ENCODE measurements at regions of chr6 and their contacts with region 1.

Region 1: DNA sequence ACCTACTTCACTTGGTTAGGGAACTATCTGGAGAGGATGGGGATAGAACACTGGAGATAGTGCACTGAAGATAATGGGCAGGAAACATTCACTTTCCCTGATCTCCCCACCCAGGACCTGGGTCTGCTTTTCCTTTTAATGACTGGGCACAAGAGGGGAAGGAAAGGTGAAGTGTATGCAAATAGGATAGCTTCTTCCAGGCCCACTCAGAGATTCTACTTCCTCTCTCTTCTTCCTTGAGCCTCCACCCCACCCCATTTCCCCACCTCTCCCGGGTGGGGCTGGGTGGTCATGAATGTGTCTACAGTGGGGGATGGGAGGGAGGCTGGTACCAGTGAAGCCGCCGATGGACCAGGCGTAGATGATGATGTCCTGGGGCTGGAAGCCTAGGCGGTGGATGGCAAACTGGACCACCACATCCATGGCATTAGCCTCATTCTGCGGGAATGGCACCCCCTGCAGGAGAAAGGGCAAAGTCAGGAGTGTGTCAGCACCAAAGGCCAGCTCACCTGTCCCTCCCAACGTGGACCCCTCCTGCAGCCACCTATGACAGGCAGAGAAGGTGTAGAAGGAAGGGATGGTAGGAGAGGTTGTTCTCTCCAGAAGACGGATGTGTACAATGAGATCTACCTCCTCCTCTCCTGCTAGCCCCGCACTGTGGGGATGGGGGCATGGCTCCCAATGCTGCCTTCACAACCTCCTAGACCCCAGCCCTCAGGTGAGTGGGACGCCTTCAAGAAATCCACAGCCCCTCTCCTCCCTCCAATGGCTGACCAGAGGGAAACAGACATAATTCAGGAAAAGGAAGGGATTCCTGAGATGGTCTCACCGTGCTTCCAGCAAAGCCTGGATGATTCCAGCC is 8.6 kb upstream of the LY6G5C start:
- DNase-seq: no peak
- CTCF ChIP-seq: no peak

Region 2: DNA sequence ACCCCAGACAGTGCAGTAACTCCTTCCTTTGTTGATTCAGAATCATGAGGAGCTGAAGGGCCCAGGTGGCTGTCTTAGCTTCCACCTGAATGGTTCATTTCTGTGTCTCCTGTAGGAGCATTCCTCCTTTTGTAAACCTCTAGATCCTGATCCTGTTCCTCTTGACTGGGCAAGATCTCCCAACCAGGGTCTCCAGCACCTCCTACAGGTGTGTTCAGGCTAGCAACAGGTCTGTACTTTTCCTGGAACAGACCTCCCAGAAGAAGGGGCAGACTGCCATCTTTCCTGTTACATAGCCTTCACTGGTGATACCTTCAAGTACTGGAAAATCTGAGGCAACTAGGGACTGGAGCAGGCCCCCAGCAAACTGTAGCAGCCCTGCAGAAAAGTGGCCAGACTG is 367.7 kb before region 1 on chr6:
- CTCF ChIA-PET with region 1: no interaction called
- POLR2A ChIA-PET with region 1: no interaction called
- DNase-seq: no peak
- CTCF ChIP-seq: no peak

Region 3: GRCh38 chr6:31712296-31712695 is 22.8 kb after region 1 on chr6:
- CTCF ChIA-PET with region 1: interaction called, 11 read pairs
- POLR2A ChIA-PET with region 1: no interaction called
- DNase-seq: no peak
- CTCF ChIP-seq: no peak

Region 4: DNA sequence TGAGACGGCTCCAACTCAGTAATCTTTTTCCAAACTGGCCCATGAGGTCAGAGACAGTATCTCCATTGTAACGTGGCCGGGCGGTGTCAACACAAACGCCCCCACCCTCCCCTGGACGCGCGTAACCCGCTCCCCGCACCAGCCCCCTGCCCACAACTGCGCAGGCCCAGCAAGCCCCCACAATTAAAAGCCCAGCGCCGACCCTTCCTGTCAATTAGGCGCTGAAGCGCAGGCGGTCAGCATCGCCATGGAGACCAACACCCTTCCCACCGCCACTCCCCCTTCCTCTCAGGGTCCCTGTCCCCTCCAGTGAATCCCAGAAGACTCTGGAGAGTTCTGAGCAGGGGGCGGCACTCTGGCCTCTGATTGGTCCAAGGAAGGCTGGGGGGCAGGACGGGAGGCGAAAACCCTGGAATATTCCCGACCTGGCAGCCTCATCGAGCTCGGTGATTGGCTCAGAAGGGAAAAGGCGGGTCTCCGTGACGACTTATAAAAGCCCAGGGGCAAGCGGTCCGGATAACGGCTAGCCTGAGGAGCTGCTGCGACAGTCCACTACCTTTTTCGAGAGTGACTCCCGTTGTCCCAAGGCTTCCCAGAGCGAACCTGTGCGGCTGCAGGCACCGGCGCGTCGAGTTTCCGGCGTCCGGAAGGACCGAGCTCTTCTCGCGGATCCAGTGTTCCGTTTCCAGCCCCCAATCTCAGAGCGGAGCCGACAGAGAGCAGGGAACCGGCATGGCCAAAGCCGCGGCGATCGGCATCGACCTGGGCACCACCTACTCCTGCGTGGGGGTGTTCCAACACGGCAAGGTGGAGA is 125.8 kb after region 1 on chr6 and contains the starts of genes HSPA1A and HSPA1L:
- CTCF ChIA-PET with region 1: no interaction called
- POLR2A ChIA-PET with region 1: interaction called, 10 read pairs
- DNase-seq: peak; percentile 86
- CTCF ChIP-seq: no peak